Activated CD4-positive, alpha-beta memory T cell treated with anti-CD3 and anti-CD28 coated beads for 36 hours (primary cell): ENCODE measurements at regions of chr17 and their contacts with region 1.

Region 1: DNA sequence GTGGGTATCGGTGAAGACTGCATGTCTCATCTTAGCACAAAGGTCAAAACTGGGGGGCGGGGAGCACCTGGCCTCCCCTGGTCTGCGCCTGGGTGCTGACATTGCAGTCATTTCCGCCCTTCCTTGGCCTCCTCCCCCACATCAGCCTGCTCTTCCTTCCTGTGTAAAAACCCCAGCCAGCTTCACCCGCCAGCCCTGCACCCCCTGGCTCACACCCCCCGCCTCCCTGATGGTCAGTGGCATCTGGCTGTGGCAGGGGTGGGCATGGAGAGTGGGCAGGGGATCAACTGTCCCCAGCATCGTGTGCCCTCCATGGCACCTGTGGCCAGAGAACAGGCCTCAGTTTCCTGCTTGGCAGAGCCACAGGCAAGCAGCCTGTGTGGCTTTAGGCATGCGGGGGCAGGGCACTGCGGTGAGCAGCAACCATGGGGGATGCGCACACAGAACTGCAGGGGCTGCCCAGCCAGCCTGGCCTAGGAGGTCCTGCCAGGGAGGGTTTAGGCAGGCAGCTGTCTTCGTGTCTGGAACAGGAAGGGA is 26.5 kb upstream of the LASP1NB start:
- DNase-seq: peak; percentile 94
- H3K4me3 Mint-ChIP-seq: peak overlapping the region; percentile 58
- H3K27ac Mint-ChIP-seq: peak overlapping the region; percentile 94
- H3K4me1 Mint-ChIP-seq: peaks cover 67% of the 10 kb centered on the region
- H3K27me3 Mint-ChIP-seq: no peaks in the 10 kb centered on the region

Region 2: GRCh38 chr17:38786372-38786771 is 112.5 kb before region 1 on chr17:
- CTCF ChIA-PET with region 1: no interaction called
- POLR2A ChIA-PET with region 1: no interaction called
- intact Hi-C with region 1: no loop called
- DNase-seq: no peak
- H3K4me3 Mint-ChIP-seq: no peak overlapping the region
- H3K27ac Mint-ChIP-seq: no peak overlapping the region
- H3K4me1 Mint-ChIP-seq: peaks cover 3% of the 10 kb centered on the region
- H3K27me3 Mint-ChIP-seq: no peaks in the 10 kb centered on the region

Region 3: DNA sequence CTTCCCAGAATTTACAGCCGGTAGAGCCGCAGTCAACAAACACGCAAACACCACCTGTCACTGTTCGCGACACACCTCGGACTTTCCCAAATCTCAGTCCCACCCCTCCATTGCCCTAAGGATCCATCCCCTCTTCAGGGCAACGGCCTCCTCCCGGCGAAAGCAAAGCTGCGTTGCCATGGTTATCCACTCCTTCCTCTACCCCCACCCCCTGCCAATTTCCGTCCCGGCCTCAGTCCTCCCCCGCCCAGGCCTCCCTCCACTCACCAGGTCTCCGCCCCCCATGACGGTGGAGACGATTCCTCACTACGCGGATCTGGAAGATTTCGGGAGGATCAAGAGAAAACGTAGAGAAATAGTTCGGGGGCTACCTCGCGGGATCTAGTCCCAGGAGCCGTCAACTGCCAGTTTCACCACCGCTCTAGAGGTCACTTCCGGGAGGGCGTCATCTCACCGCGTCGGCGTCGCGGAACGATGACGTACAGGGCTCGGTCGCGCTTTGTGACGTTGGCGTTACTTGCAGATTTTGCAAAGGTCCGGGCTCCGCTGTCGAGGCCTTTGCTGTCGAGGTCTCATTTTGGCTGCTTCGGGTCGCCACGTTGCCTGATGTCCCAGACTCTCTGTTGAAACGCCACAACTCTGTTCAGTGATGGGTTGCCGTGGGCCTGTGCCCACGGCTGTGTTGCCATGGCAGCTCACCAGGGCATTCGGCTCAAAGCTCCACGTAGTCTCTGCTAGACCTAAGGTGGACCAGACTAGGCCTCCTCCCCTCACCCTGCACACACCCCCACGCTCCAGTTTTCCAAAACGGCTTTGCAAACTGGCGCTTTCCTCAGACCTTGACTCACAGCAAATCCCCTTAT is 73.8 kb before region 1 on chr17 and contains the start of gene CWC25:
- CTCF ChIA-PET with region 1: no interaction called
- POLR2A ChIA-PET with region 1: interaction called, 3 read pairs
- intact Hi-C with region 1: loop called (anchors 1 kb)
- DNase-seq: peak; percentile 98
- H3K4me3 Mint-ChIP-seq: peak within 1 kb of the TSS; percentile 98
- H3K27ac Mint-ChIP-seq: peak within 1 kb of the TSS; percentile 99
- H3K4me1 Mint-ChIP-seq: peaks cover 26% of the 10 kb centered on the region
- H3K27me3 Mint-ChIP-seq: no peaks in the 10 kb centered on the region
- total RNA-seq, gene CWC25: 21.1 to 21.5 TPM

Region 4: DNA sequence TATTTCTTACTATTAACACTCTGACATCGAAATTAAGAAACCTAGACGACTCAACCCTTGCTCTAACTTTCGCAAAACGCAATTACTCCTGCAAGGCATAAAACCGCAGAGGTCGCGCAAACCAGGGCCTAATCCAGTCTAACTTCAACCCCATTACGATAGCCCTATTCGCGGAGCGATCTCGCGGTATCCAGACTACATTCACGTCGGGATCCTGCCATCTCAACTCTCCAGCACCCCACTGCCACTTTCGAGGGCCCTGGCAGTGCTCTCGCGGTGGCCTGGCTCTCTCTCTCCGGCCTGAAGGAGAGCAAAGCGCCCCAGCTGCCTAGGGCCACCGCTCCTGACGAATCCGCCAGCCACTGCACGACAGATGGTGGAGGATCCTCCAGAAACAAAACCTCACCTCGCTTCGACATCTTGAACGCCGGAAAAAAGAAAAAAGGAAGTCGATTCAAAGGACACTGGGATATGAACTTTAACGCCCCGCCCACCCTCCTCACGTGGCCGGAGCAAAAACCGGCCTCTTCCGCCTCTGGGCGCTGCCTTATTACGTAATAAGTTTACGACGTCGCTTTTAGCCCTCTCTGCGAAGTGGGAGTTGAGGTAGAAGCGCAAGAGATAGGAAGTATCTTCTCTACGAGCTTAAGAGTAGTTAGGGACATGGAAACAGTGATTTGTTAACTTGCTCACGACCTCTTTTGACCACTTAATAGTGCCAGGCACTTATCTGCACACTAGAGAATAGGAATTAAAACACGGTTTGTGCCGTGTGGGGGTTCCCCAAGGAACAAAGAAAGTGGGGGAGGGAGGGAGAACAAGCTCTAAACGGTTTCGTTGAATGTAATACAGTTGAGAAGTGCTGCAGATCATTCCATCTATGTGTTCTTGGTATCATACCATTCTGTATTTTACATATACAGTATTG is 45.3 kb before region 1 on chr17 and contains the start of gene RPL23:
- CTCF ChIA-PET with region 1: no interaction called
- POLR2A ChIA-PET with region 1: interaction called, 14 read pairs
- intact Hi-C with region 1: no loop called
- DNase-seq: peak; percentile 95
- H3K4me3 Mint-ChIP-seq: peak within 1 kb of the TSS; percentile 99
- H3K27ac Mint-ChIP-seq: peak within 1 kb of the TSS; percentile 99
- H3K4me1 Mint-ChIP-seq: peaks cover 38% of the 10 kb centered on the region
- H3K27me3 Mint-ChIP-seq: no peaks in the 10 kb centered on the region
- total RNA-seq, gene RPL23: 1,774 to 1,791 TPM

Region 5: DNA sequence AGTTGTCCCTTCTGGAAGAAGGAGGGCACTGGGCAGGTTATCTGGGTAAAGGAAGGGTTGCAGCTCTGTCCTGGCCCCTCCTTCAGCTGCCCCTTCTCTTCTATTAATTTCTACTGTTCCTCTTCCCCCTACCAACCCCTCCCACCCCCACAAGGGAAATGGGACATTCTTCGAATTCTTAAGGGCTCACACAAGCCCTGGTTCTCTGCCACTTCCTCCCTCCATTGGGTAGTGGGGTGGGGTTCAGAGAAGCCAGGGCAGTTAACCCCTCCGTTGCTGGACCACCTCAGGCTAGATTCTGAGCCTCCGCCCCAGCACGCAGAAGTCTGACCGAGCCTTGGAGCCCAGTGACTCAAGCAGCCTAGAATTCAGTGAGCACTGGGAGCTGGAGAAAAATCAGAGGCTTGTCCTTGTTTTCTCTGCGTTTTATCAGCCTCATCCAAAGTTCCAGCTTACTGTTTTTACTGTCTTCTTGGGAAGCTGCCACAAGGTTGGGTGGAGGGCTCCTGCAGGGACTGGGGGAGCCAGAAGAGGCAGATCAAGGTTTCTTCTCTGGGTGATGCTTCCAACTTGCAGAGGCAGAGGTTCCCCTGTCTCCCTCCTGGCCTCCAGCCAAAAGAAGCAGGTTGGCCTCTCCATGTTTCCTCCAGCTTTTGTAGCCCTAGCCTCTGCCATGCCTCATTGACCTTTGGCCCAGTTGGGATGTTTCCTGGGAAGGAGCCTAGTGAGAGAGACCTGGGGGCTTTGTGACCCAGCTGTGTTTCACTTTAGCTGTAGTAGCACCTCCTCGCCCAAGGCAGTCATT is 18.8 kb before region 1 on chr17:
- CTCF ChIA-PET with region 1: interaction called, 11 read pairs
- POLR2A ChIA-PET with region 1: interaction called, 4 read pairs
- intact Hi-C with region 1: no loop called
- DNase-seq: no peak
- H3K4me3 Mint-ChIP-seq: no peak overlapping the region
- H3K27ac Mint-ChIP-seq: peak overlapping the region; percentile 80
- H3K4me1 Mint-ChIP-seq: peaks cover 86% of the 10 kb centered on the region
- H3K27me3 Mint-ChIP-seq: no peaks in the 10 kb centered on the region

Region 6: GRCh38 chr17:38943607-38944006 is 44.7 kb after region 1 on chr17:
- CTCF ChIA-PET with region 1: no interaction called
- POLR2A ChIA-PET with region 1: no interaction called
- intact Hi-C with region 1: loop called (anchors 10 kb)
- DNase-seq: peak; percentile 51
- H3K4me3 Mint-ChIP-seq: no peak overlapping the region
- H3K27ac Mint-ChIP-seq: peak overlapping the region; percentile 18
- H3K4me1 Mint-ChIP-seq: no peaks in the 10 kb centered on the region
- H3K27me3 Mint-ChIP-seq: no peaks in the 10 kb centered on the region